H1 (cell line): ENCODE measurements at regions of chr5 and their contacts with region 1.

Region 1: DNA sequence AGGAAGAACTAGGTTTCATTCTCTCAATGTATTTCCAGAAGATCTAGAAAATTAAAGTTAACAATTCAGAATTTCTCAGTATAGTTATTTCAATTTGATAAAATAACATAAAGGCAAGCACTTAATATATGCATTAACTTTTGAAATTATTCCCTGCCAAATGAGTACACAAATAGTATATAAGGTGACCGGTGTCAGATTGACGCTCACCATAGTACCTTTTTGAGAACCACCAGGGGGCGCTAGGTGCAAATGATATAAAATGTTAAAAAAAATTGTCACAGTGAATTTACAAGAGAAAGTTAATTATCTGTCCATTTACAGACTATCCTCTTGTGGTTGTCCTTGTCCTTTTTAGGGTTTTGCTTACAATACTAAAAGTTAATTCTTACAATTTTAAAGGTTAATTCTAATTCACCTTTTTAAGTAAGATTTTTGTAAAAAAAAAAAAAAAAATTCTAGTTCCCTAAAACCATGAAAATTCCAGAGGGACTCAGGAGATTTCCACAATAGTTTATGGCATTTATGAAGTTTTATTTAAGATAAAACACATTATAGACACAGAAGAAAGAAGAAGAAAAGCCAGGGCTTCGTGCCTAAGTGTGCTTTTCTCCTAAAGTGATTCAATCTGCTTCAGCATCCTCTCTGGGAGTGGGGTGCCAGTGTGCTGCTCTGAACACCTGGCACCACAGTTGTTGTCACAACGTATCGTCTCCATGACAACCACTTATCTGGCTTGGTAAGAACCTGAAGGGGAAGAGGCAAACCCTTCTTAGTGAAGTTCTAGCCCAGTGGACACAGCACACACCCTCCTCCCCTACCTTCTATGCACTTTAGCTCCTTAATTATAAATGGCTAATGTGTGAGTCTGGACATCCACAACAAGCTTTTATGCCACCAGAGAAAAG is 1.7 kb downstream of the ADAMTS16 start:
- DNase-seq: no peak
- H3K4me3 ChIP-seq: peak overlapping the region in 1 of 4 experiments; percentile 92; a peak in 3 of 8 replicates
- H3K27ac ChIP-seq: no peak overlapping the region; the same call in 1 of the 2 replicates
- H3K4me1 ChIP-seq: peaks cover 3 to 9% (median 5%) of the 10 kb centered on the region in 4 experiments; a peak in 6 of 7 replicates
- H3K27me3 ChIP-seq: peaks cover 0 to 20% (median 8%) of the 10 kb centered on the region in 4 experiments; a peak in 5 of 7 replicates
- CTCF ChIP-seq: peak in 2 of 3 experiments; percentile 42 to 44; a peak in 2 of 4 replicates
- EP300 ChIP-seq: 0 out of 3 replicates have a peak, but pooled peaks of 1 of the 2 experiments have one; percentile 47
- POLR2A ChIP-seq: no peak
- RAD21 ChIP-seq: peak; percentile 74 to 79

Region 2: DNA sequence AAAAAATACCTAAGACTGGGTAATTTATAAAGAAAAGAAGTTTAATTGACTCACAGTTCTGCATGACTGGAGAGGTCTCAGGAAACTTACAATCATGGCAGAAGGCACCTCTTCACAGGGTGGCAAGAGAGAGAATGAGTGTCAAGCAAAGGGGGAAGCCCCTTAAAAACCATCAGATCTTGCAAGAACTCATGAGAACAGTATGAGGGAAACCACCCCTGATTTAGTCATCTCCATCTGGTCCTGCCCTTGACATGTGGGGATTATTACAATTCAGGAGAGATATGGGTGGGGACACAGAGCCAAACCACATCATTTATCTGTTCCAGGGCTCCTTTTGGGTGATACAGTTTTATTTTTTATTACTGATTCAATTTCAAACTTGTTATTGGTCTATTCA is 24.9 kb before region 1 on chr5:
- CTCF ChIA-PET with region 1: no interaction called
- POLR2A ChIA-PET with region 1: no interaction called
- DNase-seq: no peak
- H3K4me3 ChIP-seq: no peak overlapping the region
- H3K27ac ChIP-seq: no peak overlapping the region
- H3K4me1 ChIP-seq: 0 out of 7 replicates have a peak, but pooled peaks cover 0 to 2% (median 0%) of the 10 kb centered on the region in 4 experiments
- H3K27me3 ChIP-seq: no peaks in the 10 kb centered on the region; a peak in 1 of 7 replicates
- CTCF ChIP-seq: no peak
- EP300 ChIP-seq: no peak
- POLR2A ChIP-seq: no peak
- RAD21 ChIP-seq: no peak

Region 3: DNA sequence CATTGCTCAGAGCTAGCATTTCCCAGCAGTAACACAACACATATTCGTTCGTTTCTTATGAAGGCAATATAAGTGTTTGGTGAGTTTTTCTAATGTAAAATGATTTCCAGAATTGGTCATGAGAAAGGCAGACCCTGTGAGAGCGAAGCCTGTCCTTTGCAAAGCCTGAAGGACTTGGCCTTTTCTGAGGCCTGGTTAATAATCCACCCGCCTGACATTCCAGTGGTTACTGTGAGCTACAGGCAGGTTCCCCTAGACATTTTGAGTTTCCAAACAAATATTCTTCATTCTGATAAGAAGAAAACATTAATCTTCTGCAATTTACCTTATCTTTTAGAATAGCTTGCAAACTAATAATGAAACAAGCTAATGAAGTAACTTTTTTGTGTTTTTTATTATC is 36.3 kb after region 1 on chr5:
- CTCF ChIA-PET with region 1: no interaction called
- POLR2A ChIA-PET with region 1: interaction called, 11 read pairs
- DNase-seq: no peak
- H3K4me3 ChIP-seq: no peak overlapping the region
- H3K27ac ChIP-seq: no peak overlapping the region
- H3K4me1 ChIP-seq: peaks cover 15 to 30% (median 27%) of the 10 kb centered on the region in 4 experiments
- H3K27me3 ChIP-seq: no peaks in the 10 kb centered on the region
- CTCF ChIP-seq: no peak
- EP300 ChIP-seq: no peak
- POLR2A ChIP-seq: no peak
- RAD21 ChIP-seq: no peak

Region 4: DNA sequence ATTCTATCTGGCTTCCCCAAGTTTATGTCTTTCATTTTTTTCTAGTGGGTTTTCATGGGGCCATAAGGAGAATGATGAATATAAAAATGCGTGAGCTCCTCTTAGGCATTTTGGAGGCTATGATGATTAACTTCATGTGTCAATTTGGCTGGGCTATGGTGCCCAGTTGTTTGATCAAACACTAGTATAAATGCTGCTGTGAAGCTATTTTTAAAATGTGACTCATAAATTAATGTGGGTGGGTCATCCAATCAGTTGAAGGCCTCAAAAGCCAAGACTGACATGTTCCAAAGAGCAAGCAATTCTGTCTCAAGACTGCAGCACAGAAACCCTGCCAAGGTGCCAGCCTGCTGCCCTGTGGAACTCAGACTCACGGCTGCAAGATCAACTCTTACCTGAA is 256.2 kb after region 1 on chr5:
- CTCF ChIA-PET with region 1: interaction called, 19 read pairs
- POLR2A ChIA-PET with region 1: no interaction called
- DNase-seq: no peak
- H3K4me3 ChIP-seq: no peak overlapping the region
- H3K27ac ChIP-seq: no peak overlapping the region
- H3K4me1 ChIP-seq: no peaks in the 10 kb centered on the region
- H3K27me3 ChIP-seq: no peaks in the 10 kb centered on the region
- CTCF ChIP-seq: no peak
- EP300 ChIP-seq: no peak
- POLR2A ChIP-seq: no peak
- RAD21 ChIP-seq: no peak